GM10248 (cell line): ENCODE measurements at regions of chr15 and their contacts with region 1.

Region 1: DNA sequence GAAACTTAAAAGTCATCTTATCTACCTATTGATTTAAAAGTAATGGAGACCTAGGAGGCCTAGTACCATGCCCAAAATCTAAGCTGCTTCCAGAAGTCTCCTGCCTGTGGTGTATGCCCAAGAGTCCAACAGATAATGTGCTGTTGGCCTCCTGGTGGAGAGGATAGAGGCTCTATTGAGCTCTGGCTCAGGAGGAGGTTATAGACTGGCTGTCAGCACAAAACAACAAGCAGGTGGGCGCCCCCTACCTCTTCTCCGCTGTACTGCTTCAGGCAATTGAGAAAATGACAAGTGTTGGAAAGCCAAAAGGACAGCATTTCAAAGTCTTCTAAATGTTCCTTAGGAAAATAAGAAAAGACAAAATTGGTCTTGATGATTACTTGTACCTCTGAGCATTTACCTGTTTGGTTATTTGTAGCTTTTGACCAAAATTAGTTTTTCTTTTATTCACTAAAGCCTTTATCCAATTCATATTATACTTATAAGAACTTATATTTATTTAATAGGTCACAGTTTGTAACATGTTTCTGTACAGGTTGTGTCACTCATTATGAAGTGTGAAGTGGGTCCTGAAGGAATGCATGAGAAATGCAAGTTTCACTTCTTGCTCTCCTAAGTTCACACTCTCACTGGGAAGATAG is 17.2 kb upstream of the GNB5 start:
- DNase-seq: peak; percentile 65
- CTCF ChIP-seq: peak; percentile 77

Region 2: DNA sequence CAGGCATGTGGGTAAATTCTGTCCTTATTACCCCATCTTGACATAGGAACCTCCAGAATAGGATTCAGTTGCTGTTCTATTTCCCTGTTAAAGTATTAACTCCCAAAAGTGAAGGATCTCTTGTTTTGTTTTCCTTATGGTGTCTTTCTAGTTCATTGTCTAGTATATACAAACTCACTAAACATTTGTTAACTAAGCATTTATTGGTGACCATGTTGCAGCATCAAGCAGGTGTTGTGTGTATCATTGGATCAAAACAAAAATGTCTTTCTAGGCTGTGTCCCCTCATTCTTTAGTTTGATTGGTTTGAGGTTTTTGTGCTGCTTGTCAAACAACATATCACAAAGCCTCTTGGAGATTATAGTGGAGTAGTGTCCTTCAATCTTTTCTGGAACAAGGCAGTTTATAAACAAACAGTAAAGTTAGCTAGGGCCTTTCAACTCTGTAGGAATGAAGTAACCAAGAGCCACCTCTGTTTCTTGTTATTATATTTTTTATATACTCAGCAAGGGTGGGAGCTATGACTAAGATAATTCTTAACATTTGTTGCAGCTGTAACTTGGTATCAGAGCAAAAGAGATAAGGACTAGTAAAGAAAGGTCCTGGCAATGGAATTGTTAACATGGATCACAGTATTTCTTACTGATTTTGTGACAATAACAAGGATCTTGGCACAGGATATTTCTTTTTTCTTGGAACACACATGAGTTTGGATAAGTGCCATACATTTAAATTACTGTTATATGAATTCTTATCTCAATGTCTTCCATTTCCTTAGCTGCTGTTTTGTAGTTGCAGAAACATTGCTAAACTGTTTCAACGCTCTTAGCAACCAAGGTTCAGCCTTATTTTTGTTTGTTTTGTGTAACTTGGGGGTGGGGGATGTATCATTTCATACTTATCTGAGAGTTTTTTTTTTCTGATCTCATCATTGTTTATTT is 329.7 kb before region 1 on chr15:
- CTCF ChIA-PET with region 1: interaction called, 10 read pairs
- POLR2A ChIA-PET with region 1: no interaction called
- DNase-seq: no peak
- CTCF ChIP-seq: no peak

Region 3: GRCh38 chr15:52163321-52164190 is 44.9 kb before region 1 on chr15:
- CTCF ChIA-PET with region 1: interaction called, 15 read pairs
- POLR2A ChIA-PET with region 1: no interaction called
- DNase-seq: no peak
- CTCF ChIP-seq: peak; percentile 40

Region 4: DNA sequence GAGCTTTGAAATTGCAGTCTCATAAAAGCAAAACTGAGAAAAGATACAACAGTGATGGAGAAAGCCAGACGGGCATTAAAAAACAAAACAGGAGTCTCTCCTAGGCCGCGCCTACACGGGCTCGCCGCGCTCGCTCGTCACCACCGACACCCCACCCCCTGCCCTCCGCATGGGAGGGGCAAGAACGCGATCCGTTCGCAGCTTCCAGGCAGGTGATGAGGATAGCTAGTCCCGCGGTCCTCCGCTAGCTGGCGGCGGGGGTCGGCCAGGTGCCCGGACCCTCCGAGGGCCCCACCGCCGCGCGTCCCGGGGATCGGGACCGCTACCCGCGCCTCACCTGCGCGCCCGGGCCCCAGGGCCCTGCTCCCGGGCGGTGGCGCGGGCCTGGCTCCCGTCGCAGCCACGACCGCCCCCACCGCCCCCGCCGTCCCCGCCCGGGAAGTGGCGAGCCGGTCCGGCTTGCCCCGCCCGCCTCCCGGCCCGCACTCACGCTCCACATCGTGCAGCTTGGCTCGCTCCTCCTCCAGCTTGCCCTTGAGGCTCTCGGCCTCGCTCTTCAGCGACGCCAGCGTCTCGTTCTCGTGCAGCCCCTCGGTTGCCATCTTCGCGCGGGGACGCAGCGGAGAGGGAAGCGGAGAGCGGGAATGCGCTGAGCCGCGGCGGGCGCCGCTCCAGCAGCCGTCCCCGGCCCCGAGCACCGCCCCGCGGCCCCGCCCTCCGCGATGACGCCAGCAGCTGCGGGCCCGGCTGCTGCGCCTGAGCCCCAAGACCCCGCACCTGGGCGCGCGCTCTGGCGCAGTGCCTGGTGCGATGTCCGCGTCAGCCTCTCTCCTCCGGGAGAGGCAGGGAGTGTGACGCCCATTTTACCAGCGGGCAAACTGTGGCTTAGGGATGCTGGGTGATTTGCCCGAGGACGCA is 28.9 kb before region 1 on chr15:
- CTCF ChIA-PET with region 1: interaction called, 20 read pairs
- POLR2A ChIA-PET with region 1: no interaction called
- DNase-seq: peak; percentile 91
- CTCF ChIP-seq: no peak

Region 5: GRCh38 chr15:52227456-52227855 is 19.0 kb after region 1 on chr15:
- CTCF ChIA-PET with region 1: interaction called, 64 read pairs
- POLR2A ChIA-PET with region 1: no interaction called
- DNase-seq: peak; percentile 79
- CTCF ChIP-seq: peak; percentile 83